HCT116 (cell line): ENCODE measurements at regions of chr4 and their contacts with region 1.

Region 1: DNA sequence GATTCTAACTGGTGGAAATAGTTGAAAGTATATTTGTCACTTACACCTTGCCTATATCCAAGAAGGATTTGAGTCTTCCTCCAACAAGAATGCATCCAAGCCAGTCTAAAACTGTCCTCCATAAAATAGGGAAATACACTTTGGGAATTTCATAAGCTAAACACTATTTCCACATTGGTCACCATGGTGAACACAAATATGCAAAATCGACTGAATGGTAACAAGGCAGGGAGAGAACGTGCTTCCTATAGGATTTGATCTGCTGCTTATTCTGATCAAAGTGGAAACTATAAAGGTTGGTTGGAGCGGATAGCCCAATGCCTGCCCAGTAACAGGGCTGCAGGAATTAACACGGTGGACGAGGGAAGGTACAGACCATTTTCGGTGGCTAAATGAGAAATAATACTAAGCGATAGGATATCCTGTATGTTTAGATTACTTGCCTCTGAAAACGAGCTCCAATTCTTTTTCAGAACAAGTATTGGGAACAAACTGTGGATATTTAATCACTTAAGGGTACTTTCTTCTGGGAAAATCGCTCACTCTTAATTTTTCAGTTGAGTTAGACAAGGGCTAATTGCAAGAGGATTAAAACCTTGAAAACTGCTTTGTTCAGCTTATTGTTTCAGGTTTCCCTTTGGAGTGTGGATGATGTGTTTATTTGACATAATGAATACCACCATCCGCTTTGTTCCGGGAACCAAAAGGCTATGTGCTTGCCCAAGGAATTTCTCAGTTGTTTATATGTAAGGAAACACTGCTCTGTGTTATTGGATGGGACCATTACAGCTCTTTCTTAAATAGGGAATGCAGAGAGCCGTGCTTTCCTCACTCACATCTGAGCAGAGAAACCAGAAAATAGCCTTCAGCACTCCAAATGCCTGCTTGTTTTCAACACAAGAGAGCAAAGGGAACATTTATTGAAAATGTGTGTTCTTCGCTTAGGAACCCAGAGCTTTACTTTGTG is 194.4 kb downstream of the CBR4 start:
- DNase-seq: no peak
- ATAC-seq: no peak
- H3K4me3 ChIP-seq: no peak overlapping the region
- H3K27ac ChIP-seq: no peak overlapping the region
- H3K4me1 ChIP-seq: peaks cover 8 to 18% of the 10 kb centered on the region in 2 experiments; a peak in 3 of 4 replicates
- H3K27me3 ChIP-seq: no peaks in the 10 kb centered on the region
- CTCF ChIP-seq: no peak
- POLR2A ChIP-seq: no peak
- RAD21 ChIP-seq: no peak

Region 2: GRCh38 chr4:168831919-168832762 is 16.5 kb after region 1 on chr4:
- CTCF ChIA-PET with region 1: no interaction called
- POLR2A ChIA-PET with region 1: interaction called, 27 read pairs
- RAD21 ChIA-PET with region 1: interaction called in 1 of 2 experiments, 4 read pairs
- intact Hi-C with region 1: loop called (anchors 1 kb)
- DNase-seq: peak; percentile 32
- ATAC-seq: peak; percentile 81
- H3K4me3 ChIP-seq: peak overlapping the region; percentile 93 to 96
- H3K27ac ChIP-seq: peak overlapping the region; percentile 67
- H3K4me1 ChIP-seq: peaks cover 22 to 28% of the 10 kb centered on the region in 2 experiments; a peak in 3 of 4 replicates
- H3K27me3 ChIP-seq: no peaks in the 10 kb centered on the region
- CTCF ChIP-seq: no peak
- POLR2A ChIP-seq: peak; percentile 90
- RAD21 ChIP-seq: no peak; the same call in 1 of the 2 replicates